Activated CD4-positive, alpha-beta T cell treated with anti-CD3 and anti-CD28 coated beads for 36 hours (primary cell): ENCODE measurements at regions of chr16 and their contacts with region 1.

Region 1: DNA sequence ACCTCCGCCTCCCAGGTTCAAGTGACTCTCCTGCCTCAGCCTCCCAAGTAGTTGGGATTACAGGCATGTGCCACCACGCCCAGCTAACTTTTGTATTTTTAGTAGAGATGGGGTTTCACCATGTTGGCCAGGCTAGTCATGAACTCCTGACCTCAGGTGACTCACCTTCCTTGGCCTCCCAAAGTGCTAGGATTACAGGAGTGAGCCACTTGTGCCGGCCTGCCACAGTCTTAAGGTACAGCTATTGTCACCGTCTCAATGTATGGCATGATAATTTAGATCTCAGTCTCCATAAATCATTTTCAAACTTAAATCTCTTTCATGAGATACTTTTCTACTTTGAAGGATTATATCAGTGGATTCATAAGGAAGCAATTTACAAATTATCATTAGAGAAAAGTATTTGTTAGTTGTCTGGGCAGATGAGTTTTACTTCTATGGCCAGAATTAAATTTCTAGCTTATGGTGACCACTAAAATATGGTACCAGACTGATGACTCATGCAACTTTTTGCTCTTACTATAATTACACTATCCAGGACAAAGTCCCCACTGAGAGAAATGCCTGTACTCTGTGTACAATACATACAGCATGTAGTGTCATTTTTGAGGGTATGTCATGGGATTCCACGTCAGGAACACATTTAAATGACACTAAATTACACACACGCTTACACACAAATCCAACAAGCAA is 1230.3 kb upstream of the GOT2 start:
- DNase-seq: no peak
- ATAC-seq: no peak
- H3K4me3 Mint-ChIP-seq: no peak overlapping the region
- H3K27ac Mint-ChIP-seq: no peak overlapping the region
- H3K4me1 Mint-ChIP-seq: no peaks in the 10 kb centered on the region
- H3K27me3 Mint-ChIP-seq: no peaks in the 10 kb centered on the region

Region 2: GRCh38 chr16:59733321-59733720 is 231.1 kb before region 1 on chr16:
- CTCF ChIA-PET with region 1: no interaction called
- POLR2A ChIA-PET with region 1: no interaction called
- intact Hi-C with region 1: no loop called
- DNase-seq: no peak
- ATAC-seq: no peak
- H3K4me3 Mint-ChIP-seq: no peak overlapping the region
- H3K27ac Mint-ChIP-seq: no peak overlapping the region
- H3K4me1 Mint-ChIP-seq: no peaks in the 10 kb centered on the region
- H3K27me3 Mint-ChIP-seq: no peaks in the 10 kb centered on the region

Region 3: GRCh38 chr16:59905606-59906005 is 58.8 kb before region 1 on chr16:
- CTCF ChIA-PET with region 1: no interaction called
- POLR2A ChIA-PET with region 1: no interaction called
- intact Hi-C with region 1: loop called in 1 of 2 experiments (anchors 10 kb)
- DNase-seq: no peak
- ATAC-seq: no peak
- H3K4me3 Mint-ChIP-seq: no peak overlapping the region
- H3K27ac Mint-ChIP-seq: no peak overlapping the region
- H3K4me1 Mint-ChIP-seq: no peaks in the 10 kb centered on the region
- H3K27me3 Mint-ChIP-seq: no peaks in the 10 kb centered on the region

Region 4: GRCh38 chr16:60170196-60170595 is 205.8 kb after region 1 on chr16:
- CTCF ChIA-PET with region 1: no interaction called
- POLR2A ChIA-PET with region 1: no interaction called
- intact Hi-C with region 1: no loop called
- DNase-seq: no peak
- ATAC-seq: no peak
- H3K4me3 Mint-ChIP-seq: no peak overlapping the region
- H3K27ac Mint-ChIP-seq: no peak overlapping the region
- H3K4me1 Mint-ChIP-seq: no peaks in the 10 kb centered on the region
- H3K27me3 Mint-ChIP-seq: no peaks in the 10 kb centered on the region